IMR-90 (cell line): ENCODE measurements at regions of chr19 and their contacts with region 1.

Region 1: GRCh38 chr19:5292822-5293611 is 47.6 kb downstream of the PTPRS start:
- DNase-seq: peak; percentile 65
- ATAC-seq: peak; percentile 90
- H3K4me3 ChIP-seq: peak overlapping the region; percentile 95
- H3K27ac ChIP-seq: peak overlapping the region; percentile 90
- H3K4me1 ChIP-seq: peaks cover 7% of the 10 kb centered on the region
- H3K27me3 ChIP-seq: no peaks in the 10 kb centered on the region
- CTCF ChIP-seq: no peak
- POLR2A ChIP-seq: peak; percentile 83
- RAD21 ChIP-seq: no peak

Region 2: GRCh38 chr19:5022066-5022860 is 270.8 kb before region 1 on chr19:
- CTCF ChIA-PET with region 1: no interaction called
- POLR2A ChIA-PET with region 1: interaction called, 15 read pairs
- dilution Hi-C with region 1: no loop called
- in situ Hi-C with region 1: no loop called
- intact Hi-C with region 1: no loop called
- DNase-seq: no peak
- ATAC-seq: no peak
- H3K4me3 ChIP-seq: no peak overlapping the region
- H3K27ac ChIP-seq: no peak overlapping the region
- H3K4me1 ChIP-seq: peaks cover 11% of the 10 kb centered on the region; the same call in 1 of the 2 replicates
- H3K27me3 ChIP-seq: no peaks in the 10 kb centered on the region
- CTCF ChIP-seq: no peak
- POLR2A ChIP-seq: no peak
- RAD21 ChIP-seq: no peak

Region 3: DNA sequence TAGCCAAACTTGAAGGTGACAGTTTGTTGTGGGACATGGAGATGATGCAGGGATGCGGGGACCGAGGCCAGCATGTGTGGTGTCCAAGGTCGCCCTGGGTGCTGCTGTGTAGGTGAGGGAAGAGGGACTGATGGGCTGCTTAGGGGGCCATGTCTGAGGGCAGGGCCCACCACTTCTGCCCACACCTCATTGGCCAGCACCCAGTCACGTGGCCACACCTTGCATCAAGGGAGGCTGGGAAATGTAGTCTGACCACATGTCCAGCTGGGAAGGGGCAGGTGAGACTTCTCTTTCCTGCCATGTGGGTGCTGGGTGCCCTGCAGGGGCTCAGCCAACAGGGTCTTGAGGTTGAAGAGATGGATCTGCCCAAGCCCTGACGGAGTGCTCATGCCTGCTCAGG is 235.2 kb before region 1 on chr19:
- CTCF ChIA-PET with region 1: no interaction called
- POLR2A ChIA-PET with region 1: no interaction called
- dilution Hi-C with region 1: no loop called
- in situ Hi-C with region 1: no loop called
- intact Hi-C with region 1: no loop called
- DNase-seq: no peak
- ATAC-seq: peak; percentile 40
- H3K4me3 ChIP-seq: no peak overlapping the region
- H3K27ac ChIP-seq: no peak overlapping the region
- H3K4me1 ChIP-seq: no peaks in the 10 kb centered on the region
- H3K27me3 ChIP-seq: no peaks in the 10 kb centered on the region
- CTCF ChIP-seq: no peak
- POLR2A ChIP-seq: no peak
- RAD21 ChIP-seq: no peak

Region 4: GRCh38 chr19:5480427-5480836 is 187.4 kb after region 1 on chr19:
- CTCF ChIA-PET with region 1: no interaction called
- POLR2A ChIA-PET with region 1: no interaction called
- dilution Hi-C with region 1: no loop called
- in situ Hi-C with region 1: no loop called
- intact Hi-C with region 1: no loop called
- DNase-seq: no peak
- ATAC-seq: no peak
- H3K4me3 ChIP-seq: no peak overlapping the region
- H3K27ac ChIP-seq: no peak overlapping the region
- H3K4me1 ChIP-seq: peaks cover 3% of the 10 kb centered on the region; the same call in 1 of the 2 replicates
- H3K27me3 ChIP-seq: peaks cover 31% of the 10 kb centered on the region
- CTCF ChIP-seq: peak; percentile 35
- POLR2A ChIP-seq: no peak
- RAD21 ChIP-seq: peak; percentile 37